Adrenal gland (tissue), 19 donors: ENCODE measurements at regions of chr9 and their contacts with region 1.

Region 1: DNA sequence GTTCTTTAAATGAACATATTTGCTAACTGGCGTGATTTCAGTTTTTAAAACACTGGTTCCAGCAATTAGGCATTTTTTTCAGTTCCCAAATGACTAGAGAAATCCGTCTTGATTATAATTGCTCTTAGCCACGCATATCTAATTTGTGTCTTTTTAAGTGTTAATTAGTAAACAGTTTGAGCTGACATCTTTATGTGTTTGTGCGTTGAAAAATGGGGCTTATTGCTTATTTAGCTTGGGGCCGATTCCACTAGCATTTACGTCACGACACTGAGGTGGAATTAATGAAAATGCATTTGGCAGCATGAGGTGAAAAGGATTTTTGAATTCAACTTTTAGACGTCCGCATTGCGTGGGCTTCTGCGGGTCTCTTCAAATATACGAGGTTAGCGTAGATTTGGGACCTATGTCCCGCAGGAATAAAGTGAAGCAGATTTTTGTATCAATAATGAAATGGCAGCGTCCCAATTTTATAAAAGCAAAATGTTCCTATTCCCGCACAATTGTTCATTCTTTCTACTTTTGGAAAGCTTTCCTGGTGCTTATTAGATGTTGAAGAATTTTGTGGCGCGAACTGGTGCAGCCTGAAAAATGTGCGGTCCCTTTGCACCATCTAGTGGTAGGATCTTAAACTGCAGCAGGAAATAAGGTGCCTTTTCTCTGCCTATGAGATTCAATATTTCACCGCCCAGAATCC is 122.7 kb upstream of the LMX1B start:
- DNase-seq: peak in 5 of 7 donors; percentile 33 to 80 (median 64)
- H3K4me3 ChIP-seq: no peak overlapping the region
- H3K27ac ChIP-seq: no peak overlapping the region
- H3K4me1 ChIP-seq: no peaks in the 10 kb centered on the region
- H3K27me3 ChIP-seq: no peaks in the 10 kb centered on the region
- CTCF ChIP-seq: peak; percentile 89 to 98 (median 94)
- POLR2A ChIP-seq: no peak

Region 2: GRCh38 chr9:126293522-126293889 is 197.5 kb before region 1 on chr9:
- intact Hi-C with region 1: loop called in 1 of 2 experiments (anchors 10 kb)
- DNase-seq: no peak
- H3K4me3 ChIP-seq: no peak overlapping the region
- H3K27ac ChIP-seq: no peak overlapping the region
- H3K4me1 ChIP-seq: no peaks in the 10 kb centered on the region
- H3K27me3 ChIP-seq: peaks cover 6% of the 10 kb centered on the region
- CTCF ChIP-seq: no peak
- POLR2A ChIP-seq: no peak

Region 3: GRCh38 chr9:126301985-126302603 is 188.9 kb before region 1 on chr9:
- intact Hi-C with region 1: loop called (anchors 5 to 10 kb)
- DNase-seq: peak; percentile 30 to 90 (median 69)
- H3K4me3 ChIP-seq: no peak overlapping the region
- H3K27ac ChIP-seq: no peak overlapping the region
- H3K4me1 ChIP-seq: no peaks in the 10 kb centered on the region
- H3K27me3 ChIP-seq: no peaks in the 10 kb centered on the region
- CTCF ChIP-seq: peak; percentile 51 to 79 (median 73)
- POLR2A ChIP-seq: no peak

Region 4: DNA sequence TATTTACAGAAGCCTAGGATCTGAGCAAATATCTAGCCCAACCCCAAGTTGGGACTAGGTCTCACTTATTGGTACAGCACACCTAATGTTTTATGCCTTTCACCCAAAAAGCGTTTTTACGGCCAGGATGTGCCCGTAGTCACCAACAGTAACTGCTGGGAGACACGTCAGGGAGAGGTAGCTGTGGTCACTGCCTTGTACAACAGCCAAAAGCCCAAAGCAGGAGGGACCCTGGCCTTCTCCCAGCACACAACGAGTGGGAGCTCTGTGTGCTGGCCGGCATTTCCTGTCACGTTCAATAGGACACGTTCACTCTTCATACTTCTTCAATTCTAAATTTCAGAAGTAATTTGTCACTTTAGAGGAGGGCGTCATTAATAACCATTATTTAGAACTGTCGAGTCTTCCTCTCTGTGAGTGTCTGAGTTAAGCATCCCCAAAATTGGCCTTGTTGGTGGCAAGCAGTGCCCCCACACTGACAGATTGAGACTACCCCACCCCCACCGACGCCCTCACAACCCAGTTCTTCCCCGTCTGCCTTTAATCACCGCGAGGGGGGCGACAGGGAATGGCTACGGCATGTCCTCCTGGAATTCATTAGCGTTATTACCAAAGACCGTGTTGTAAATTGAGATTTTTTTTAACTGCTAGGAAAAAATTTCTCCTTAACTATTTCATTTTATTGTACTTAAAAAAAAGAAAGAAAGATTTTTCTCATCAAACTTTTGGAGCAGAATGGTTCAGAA is 83.7 kb before region 1 on chr9:
- intact Hi-C with region 1: loop called in 1 of 2 experiments (anchors 10 kb)
- DNase-seq: no peak
- H3K4me3 ChIP-seq: no peak overlapping the region
- H3K27ac ChIP-seq: no peak overlapping the region
- H3K4me1 ChIP-seq: no peaks in the 10 kb centered on the region
- H3K27me3 ChIP-seq: no peaks in the 10 kb centered on the region
- CTCF ChIP-seq: no peak
- POLR2A ChIP-seq: no peak